GM10248 (cell line): ENCODE measurements at regions of chr17 and their contacts with region 1.

Region 1: GRCh38 chr17:39174907-39175694 is 9.1 kb upstream of the ARL5C start:
- DNase-seq: peak; percentile 89
- CTCF ChIP-seq: peak; percentile 66

Region 2: DNA sequence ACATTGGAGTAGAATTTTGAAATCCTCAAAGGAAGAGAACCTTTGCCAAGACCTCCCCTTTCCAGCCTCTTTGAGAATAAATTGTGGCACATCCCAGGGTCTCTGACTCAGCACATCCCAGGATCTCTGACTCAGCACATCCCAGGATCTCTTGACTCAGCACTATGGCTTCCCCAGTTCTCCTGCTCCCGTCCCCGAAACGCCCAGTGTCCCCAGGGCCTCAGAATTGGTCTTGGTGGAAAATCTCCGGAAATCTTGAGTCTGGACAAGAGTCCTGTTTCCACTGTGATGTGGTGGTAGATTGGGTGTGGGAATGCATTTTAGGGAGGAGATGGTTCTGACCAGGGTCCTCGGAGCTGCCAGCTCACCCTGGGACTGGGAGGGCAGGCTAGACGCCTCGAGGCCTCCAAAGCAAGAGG is 42.9 kb before region 1 on chr17:
- CTCF ChIA-PET with region 1: no interaction called
- POLR2A ChIA-PET with region 1: no interaction called
- DNase-seq: no peak
- CTCF ChIP-seq: no peak

Region 3: GRCh38 chr17:39153599-39154051 is 21.5 kb before region 1 on chr17:
- CTCF ChIA-PET with region 1: interaction called, 71 read pairs
- POLR2A ChIA-PET with region 1: no interaction called
- DNase-seq: peak; percentile 75
- CTCF ChIP-seq: no peak

Region 4: GRCh38 chr17:39164675-39165143 is 10.4 kb before region 1 on chr17:
- CTCF ChIA-PET with region 1: interaction called, 107 read pairs
- POLR2A ChIA-PET with region 1: no interaction called
- DNase-seq: peak; percentile 97
- CTCF ChIP-seq: peak; percentile 75

Region 5: DNA sequence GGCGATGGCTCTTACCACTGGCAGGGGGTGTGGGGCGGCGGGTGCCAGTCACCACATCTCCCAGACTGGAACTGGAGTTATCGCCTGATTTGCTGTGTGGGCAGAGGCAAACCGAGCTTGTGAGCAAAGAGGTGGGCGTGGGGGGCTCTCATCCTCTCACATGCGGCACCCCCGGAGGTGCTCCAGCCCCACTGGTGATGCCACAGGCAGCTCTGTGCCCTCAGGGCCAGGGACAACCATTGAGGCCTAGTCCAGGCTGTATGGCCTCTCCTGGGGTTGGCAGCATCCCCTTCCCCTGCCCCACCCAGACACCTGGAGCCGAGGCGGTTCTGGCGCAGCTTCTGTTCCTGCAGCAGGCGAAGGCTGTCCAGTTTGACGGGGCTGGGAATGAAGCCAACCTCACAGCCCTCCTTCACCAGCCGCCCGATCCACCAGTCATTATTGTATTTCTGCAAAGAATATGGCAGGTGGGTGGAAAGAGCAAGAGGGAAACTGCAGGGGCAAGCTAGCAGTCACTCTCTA is 11.4 kb after region 1 on chr17:
- CTCF ChIA-PET with region 1: interaction called, 19 read pairs
- POLR2A ChIA-PET with region 1: no interaction called
- DNase-seq: no peak
- CTCF ChIP-seq: no peak

Region 6: GRCh38 chr17:39194089-39194984 is 19.2 kb after region 1 on chr17:
- CTCF ChIA-PET with region 1: interaction called, 22 read pairs
- POLR2A ChIA-PET with region 1: no interaction called
- DNase-seq: no peak
- CTCF ChIP-seq: no peak

Region 7: GRCh38 chr17:39199820-39200069 is 24.6 kb after region 1 on chr17:
- CTCF ChIA-PET with region 1: interaction called, 22 read pairs
- POLR2A ChIA-PET with region 1: no interaction called
- DNase-seq: peak; percentile 93
- CTCF ChIP-seq: no peak